Activated naive CD4-positive, alpha-beta T cell treated with anti-CD3 and anti-CD28 coated beads for 36 hours (primary cell): ENCODE measurements at regions of chr6 and their contacts with region 1.

Region 1: GRCh38 chr6:108294727-108295625 is at the start of gene AFG1L:
- DNase-seq: peak; percentile 91
- H3K4me3 Mint-ChIP-seq: peak within 1 kb of the TSS; percentile 99
- H3K27ac Mint-ChIP-seq: peak within 1 kb of the TSS; percentile 100
- H3K4me1 Mint-ChIP-seq: peaks cover 19% of the 10 kb centered on the region
- H3K27me3 Mint-ChIP-seq: no peaks in the 10 kb centered on the region
- total RNA-seq, gene AFG1L: 5.4 to 5.9 TPM

Region 2: DNA sequence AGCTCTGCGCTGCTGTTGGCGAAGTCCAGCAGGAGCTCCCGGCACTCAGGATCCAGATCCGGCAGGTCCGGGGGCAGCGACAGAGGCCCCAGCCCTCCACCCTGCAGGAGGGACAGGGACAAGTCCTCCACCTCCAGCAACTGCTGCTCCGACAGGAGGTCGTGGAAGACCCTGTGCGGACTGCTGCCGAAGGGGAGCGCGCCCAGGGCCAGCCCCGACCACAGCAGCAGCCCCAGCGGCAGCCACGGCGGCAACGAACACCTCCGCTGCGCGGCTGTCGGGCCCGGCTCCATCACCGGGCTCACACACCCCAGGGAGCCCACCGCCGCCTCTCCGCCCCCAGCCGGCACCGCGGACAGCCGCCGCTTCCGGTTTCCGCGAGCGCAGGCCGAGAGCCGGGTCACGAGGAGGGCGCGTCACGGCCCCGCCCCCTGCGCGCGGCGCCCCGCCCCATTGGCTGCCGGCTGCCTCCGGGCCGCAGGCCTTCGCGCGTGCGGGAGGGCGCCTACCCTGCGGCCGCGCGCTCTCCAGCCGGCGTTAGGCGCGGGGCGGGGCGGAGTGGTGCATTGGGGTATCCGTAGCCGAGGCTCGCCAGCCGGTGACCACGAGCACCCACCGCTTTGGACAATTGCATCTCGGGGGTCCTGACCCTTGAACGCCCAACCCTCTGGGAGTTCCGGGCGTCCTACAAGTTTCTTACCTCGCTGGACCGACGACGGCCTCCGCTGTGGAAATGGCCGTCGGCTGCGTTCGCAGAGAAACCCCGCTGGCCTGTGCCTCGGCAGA is 220.4 kb before region 1 on chr6 and contains the start of gene OSTM1:
- CTCF ChIA-PET with region 1: no interaction called
- intact Hi-C with region 1: loop called (anchors 1 kb)
- DNase-seq: peak; percentile 93
- H3K4me3 Mint-ChIP-seq: peak within 1 kb of the TSS; percentile 80
- H3K27ac Mint-ChIP-seq: peak within 1 kb of the TSS; percentile 78
- H3K4me1 Mint-ChIP-seq: peaks cover 30% of the 10 kb centered on the region
- H3K27me3 Mint-ChIP-seq: no peaks in the 10 kb centered on the region
- total RNA-seq, gene OSTM1: 7.1 to 7.5 TPM

Region 3: DNA sequence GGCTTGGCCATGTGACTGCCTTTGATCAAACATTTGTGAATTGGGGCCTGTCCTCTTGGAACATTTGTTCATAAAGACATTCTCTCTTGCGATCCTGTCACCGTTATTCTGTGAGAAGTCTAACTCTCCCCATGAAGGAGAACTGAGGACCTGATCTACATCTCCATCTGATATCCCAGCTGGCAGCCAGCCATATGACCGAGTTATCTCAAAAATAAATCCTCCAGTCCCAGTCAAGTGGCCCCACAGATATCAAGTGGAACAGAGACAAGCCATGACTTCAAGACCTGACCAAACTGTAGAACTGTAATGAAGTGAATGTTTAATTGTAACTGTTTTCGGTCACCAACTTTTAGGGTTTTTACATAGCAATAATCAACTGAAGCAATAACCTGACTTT is 59.8 kb before region 1 on chr6:
- CTCF ChIA-PET with region 1: no interaction called
- intact Hi-C with region 1: no loop called
- DNase-seq: no peak
- H3K4me3 Mint-ChIP-seq: no peak overlapping the region
- H3K27ac Mint-ChIP-seq: no peak overlapping the region
- H3K4me1 Mint-ChIP-seq: peaks cover 8% of the 10 kb centered on the region
- H3K27me3 Mint-ChIP-seq: no peaks in the 10 kb centered on the region